Activated CD8-positive, alpha-beta memory T cell treated with anti-CD3 and anti-CD28 coated beads, Interleukin-2, amount 10 ng/mL, durations not matched to agents 7 days and 5 days (primary cell): ENCODE measurements at regions of chr16 and their contacts with region 1.

Region 1: GRCh38 chr16:24504472-24505345 is 34.7 kb upstream of the RBBP6 start:
- DNase-seq: peak; percentile 66
- ATAC-seq: peak; percentile 94
- H3K4me3 Mint-ChIP-seq: no peak overlapping the region
- H3K27ac Mint-ChIP-seq: no peak overlapping the region
- H3K4me1 Mint-ChIP-seq: peaks cover 1% of the 10 kb centered on the region
- H3K27me3 Mint-ChIP-seq: peaks cover 16% of the 10 kb centered on the region

Region 2: GRCh38 chr16:24041826-24042631 is 462.7 kb before region 1 on chr16:
- CTCF ChIA-PET with region 1: interaction called, 33 read pairs
- DNase-seq: peak; percentile 87
- ATAC-seq: peak; percentile 94
- H3K4me3 Mint-ChIP-seq: no peak overlapping the region
- H3K27ac Mint-ChIP-seq: no peak overlapping the region
- H3K4me1 Mint-ChIP-seq: peaks cover 7% of the 10 kb centered on the region
- H3K27me3 Mint-ChIP-seq: no peaks in the 10 kb centered on the region

Region 3: GRCh38 chr16:24070851-24071250 is 433.9 kb before region 1 on chr16:
- CTCF ChIA-PET with region 1: interaction called, 13 read pairs
- DNase-seq: peak; percentile 63
- ATAC-seq: peak; percentile 80
- H3K4me3 Mint-ChIP-seq: no peak overlapping the region
- H3K27ac Mint-ChIP-seq: peak overlapping the region; percentile 8
- H3K4me1 Mint-ChIP-seq: peaks cover 30% of the 10 kb centered on the region
- H3K27me3 Mint-ChIP-seq: no peaks in the 10 kb centered on the region

Region 4: DNA sequence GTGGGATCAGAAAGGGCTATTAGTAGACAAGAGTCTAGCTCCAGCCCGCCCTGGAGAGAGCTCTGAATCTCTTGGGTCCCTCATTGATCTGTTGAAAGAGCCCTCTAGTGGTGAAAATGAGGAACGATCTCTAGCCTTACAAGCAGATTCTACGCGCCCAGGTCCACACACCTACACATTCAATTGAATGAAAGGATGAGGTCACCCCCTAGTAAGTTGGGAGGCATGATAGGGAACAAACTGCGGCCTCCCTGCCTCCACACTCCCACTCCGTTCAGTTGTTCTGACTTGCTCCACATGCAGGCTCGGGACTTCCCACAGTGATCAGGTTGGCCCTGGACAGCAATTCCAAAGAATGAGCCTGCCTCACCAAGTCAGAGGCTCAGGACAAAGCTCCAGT is 251.5 kb before region 1 on chr16:
- CTCF ChIA-PET with region 1: interaction called, 15 read pairs
- DNase-seq: peak; percentile 50
- ATAC-seq: peak; percentile 49
- H3K4me3 Mint-ChIP-seq: no peak overlapping the region
- H3K27ac Mint-ChIP-seq: no peak overlapping the region
- H3K4me1 Mint-ChIP-seq: no peaks in the 10 kb centered on the region
- H3K27me3 Mint-ChIP-seq: peaks cover 62% of the 10 kb centered on the region

Region 5: GRCh38 chr16:24382762-24383407 is 121.8 kb before region 1 on chr16:
- CTCF ChIA-PET with region 1: no interaction called
- DNase-seq: no peak
- ATAC-seq: no peak
- H3K4me3 Mint-ChIP-seq: no peak overlapping the region
- H3K27ac Mint-ChIP-seq: no peak overlapping the region
- H3K4me1 Mint-ChIP-seq: no peaks in the 10 kb centered on the region
- H3K27me3 Mint-ChIP-seq: peaks cover 2% of the 10 kb centered on the region

Region 6: GRCh38 chr16:24452724-24453123 is 52.0 kb before region 1 on chr16:
- CTCF ChIA-PET with region 1: no interaction called
- DNase-seq: no peak
- ATAC-seq: no peak
- H3K4me3 Mint-ChIP-seq: no peak overlapping the region
- H3K27ac Mint-ChIP-seq: no peak overlapping the region
- H3K4me1 Mint-ChIP-seq: no peaks in the 10 kb centered on the region
- H3K27me3 Mint-ChIP-seq: peaks cover 21% of the 10 kb centered on the region

Region 7: DNA sequence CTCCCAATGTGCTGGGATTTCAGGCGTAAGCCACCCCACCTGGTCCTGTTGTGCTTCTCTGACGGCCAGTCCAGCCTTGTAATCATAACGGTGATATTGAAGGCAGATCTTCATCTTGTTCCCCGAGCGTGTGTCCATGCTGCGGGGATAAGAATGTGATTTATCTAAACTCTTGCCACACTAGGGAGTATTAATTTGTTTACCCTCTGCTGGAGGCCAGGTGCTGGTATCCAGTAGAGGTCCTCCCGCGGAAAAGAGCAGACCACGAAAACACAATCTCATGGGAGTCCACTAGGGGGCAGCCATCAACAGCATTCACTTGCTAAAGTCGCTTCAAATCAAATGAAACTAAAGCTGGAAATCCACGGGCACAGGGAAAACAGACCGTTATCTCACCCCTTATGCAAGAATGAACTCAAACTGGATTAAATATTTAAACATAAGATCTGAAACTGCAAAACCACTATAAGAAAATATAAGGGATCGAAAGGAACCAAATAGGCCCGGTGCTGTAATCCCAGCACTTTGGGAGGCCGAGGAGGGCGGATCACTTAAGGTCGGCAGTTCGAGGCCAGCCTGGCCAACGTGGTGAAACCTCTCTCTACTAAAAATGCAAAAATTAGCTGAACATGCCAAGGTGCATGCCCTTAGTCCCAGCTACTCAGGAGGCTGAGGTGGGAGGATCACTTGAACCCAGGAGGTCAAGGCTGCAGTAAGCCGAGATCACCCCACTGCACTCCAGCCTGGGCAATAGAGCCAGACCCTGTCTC is 12.4 kb after region 1 on chr16:
- CTCF ChIA-PET with region 1: interaction called, 26 read pairs
- DNase-seq: peak; percentile 83
- ATAC-seq: peak; percentile 78
- H3K4me3 Mint-ChIP-seq: peak overlapping the region; percentile 35
- H3K27ac Mint-ChIP-seq: no peak overlapping the region
- H3K4me1 Mint-ChIP-seq: peaks cover 12% of the 10 kb centered on the region
- H3K27me3 Mint-ChIP-seq: peaks cover 6% of the 10 kb centered on the region